ENCODE measurements at regions of chr22 and their contacts with region 1.

Region 1: GRCh38 chr22:38353142-38353629 is 36.0 kb upstream of the CSNK1E start:
- DNase-seq: no peak
- H3K4me3 ChIP-seq: no peak overlapping the region
- H3K27ac ChIP-seq: peak overlapping the region; percentile 7
- H3K4me1 ChIP-seq: no peaks in the 10 kb centered on the region
- H3K27me3 ChIP-seq: no peaks in the 10 kb centered on the region
- CTCF ChIP-seq: peak; percentile 91 to 98 (median 95)
- POLR2A ChIP-seq: no peak

Region 2: GRCh38 chr22:37842015-37842793 is 511.0 kb before region 1 on chr22:
- intact Hi-C with region 1: no loop called
- DNase-seq: no peak
- H3K4me3 ChIP-seq: no peak overlapping the region
- H3K27ac ChIP-seq: no peak overlapping the region
- H3K4me1 ChIP-seq: peaks cover 17% of the 10 kb centered on the region
- H3K27me3 ChIP-seq: no peaks in the 10 kb centered on the region
- CTCF ChIP-seq: no peak
- POLR2A ChIP-seq: no peak

Region 3: DNA sequence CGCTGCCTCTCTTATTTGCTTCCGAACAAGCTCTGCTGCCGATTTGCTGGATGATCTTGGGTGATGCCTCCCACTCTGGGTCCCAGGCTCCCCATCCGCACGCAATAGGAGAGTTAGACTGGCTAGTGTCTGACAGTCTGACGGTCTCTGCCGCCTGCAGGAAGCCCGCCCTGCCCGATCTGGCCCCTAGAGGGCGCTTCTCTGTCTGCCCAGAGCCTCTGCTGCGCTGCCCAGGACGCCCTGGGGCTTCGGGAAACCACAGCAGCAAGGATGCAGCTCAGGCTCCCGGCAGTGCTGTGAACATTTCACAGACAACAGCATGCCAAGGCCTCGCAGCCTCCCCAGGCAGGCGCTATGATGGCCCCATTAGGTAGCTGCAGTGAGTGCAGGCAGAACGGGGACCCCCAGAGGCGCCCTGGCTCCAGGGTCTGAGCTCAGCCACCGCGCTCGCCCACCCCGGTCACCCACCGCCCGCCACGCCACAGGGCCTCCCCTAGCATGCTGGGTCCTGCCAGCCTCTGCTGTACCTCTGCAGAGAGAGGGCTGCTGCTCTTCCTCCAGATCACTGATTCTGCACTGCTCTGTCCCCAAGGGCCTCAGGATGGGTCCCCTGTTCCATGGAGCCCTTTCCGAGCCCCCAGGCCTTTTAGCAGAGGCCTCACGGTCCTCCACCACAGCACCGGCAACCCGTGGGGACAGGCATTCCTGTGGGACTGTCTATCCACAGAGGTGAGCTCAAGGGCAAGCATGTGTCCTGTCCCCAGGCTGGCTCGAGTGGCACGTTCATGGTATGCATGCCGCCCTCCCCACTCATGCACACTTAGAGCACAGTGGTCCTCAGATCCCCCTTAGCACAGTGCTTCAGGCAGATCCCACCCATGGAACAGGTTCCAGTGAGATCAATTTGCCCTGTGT is 238.4 kb before region 1 on chr22:
- intact Hi-C with region 1: loop called (anchors 10 kb)
- DNase-seq: no peak
- H3K4me3 ChIP-seq: no peak overlapping the region
- H3K27ac ChIP-seq: no peak overlapping the region
- H3K4me1 ChIP-seq: peaks cover 5% of the 10 kb centered on the region
- H3K27me3 ChIP-seq: no peaks in the 10 kb centered on the region
- CTCF ChIP-seq: peak; percentile 35 to 83 (median 55)
- POLR2A ChIP-seq: no peak

Region 4: GRCh38 chr22:38305471-38306448 is 47.4 kb before region 1 on chr22:
- intact Hi-C with region 1: loop called (anchors 10 kb)
- DNase-seq: no peak
- H3K4me3 ChIP-seq: no peak overlapping the region
- H3K27ac ChIP-seq: peak overlapping the region; percentile 56
- H3K4me1 ChIP-seq: peaks cover 73% of the 10 kb centered on the region
- H3K27me3 ChIP-seq: no peaks in the 10 kb centered on the region
- CTCF ChIP-seq: no peak
- POLR2A ChIP-seq: no peak

Region 5: DNA sequence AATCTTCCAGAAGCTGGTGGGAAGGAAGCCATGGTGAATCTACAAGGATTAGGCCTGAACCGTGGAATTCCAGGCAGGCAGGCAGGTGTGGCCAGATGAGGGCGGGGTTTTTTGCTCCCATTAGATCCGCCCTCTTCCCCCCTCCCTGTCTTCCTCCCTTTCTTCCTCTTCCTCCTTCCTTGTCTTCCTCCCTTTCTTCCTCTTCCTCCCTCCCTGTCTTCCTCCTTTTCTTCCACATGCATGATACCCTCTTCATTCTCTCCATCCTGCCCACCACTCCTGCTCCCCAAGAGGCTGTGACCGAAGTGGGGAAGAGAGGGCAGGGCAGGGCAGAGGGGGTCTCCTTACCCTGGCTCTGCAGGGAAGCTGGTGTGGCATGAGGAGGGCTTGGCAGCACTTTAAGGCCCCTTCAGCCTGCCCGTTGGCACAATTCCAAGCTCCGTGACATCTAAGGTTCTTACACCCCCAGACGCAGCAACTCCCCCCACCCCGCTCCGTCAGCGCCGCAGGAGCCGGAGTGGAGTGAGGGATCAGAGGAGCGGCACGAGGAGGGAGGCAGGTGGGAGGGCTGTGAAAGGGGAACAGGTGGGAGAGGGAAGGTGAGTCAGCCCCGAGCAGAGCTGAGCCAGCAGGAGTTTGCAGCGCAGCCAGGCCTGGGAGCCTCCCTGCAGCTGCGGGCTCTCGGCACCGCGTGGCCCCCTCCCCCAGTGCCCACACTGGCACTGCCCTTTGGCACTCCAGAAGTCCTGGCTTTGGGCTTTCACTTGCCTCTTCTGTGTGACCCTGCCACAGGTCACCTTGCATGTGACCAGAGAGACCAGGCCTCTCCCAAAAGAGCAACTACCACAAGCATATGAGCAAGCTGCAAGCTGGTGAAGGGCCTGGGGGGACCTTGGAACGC is 69.7 kb after region 1 on chr22:
- intact Hi-C with region 1: no loop called
- DNase-seq: no peak
- H3K4me3 ChIP-seq: no peak overlapping the region
- H3K27ac ChIP-seq: no peak overlapping the region
- H3K4me1 ChIP-seq: no peaks in the 10 kb centered on the region
- H3K27me3 ChIP-seq: no peaks in the 10 kb centered on the region
- CTCF ChIP-seq: no peak
- POLR2A ChIP-seq: no peak